Head of caudate nucleus (tissue), 42 donors: ENCODE measurements at regions of chr10 and their contacts with region 1.

Region 1: GRCh38 chr10:75111367-75111906 is at the start of gene SAMD8:
- DNase-seq: peak; percentile 87 to 98 (median 95)

Region 2: DNA sequence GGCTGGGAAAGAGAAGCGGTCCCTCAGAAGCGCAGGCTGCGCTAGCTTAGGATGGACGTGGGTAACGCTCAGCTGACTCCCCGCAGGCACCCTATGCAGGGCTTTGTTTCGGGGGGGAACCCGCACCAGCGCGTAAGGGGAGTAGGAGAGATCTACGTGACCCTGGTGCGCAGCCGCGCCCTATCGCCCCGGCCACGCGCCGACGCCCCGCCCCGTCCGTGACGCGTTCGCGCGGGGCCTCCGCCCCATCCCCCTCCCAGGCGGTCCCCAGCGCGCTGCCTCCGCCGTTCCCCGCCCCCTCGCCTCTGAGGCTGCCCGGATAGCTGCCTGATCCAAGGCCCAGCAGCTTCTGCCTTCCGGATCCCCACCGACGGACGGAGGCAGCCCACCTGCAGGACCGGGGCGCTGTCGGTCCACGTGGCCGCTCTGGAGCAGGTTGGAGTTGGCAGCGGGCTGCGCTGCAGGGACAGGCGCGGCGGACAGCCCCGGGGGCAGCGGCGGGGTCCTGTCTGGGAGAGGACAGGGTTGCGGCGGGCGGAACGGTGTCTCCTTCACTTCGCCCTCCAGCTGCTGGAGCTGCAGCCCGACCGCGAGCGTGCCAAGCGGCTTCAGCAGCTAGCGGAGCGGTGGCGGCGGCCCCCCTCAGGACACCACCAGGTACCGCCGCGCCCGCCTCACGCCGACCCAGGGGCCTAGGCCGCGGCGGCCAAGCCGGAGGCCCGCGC is 99.0 kb after region 1 on chr10 and contains the start of gene VDAC2:
- intact Hi-C with region 1: loop called (anchors 2 kb)
- DNase-seq: peak; percentile 73 to 97 (median 93)